ENCODE measurements at regions of chr6 and their contacts with region 1.

Region 1: DNA sequence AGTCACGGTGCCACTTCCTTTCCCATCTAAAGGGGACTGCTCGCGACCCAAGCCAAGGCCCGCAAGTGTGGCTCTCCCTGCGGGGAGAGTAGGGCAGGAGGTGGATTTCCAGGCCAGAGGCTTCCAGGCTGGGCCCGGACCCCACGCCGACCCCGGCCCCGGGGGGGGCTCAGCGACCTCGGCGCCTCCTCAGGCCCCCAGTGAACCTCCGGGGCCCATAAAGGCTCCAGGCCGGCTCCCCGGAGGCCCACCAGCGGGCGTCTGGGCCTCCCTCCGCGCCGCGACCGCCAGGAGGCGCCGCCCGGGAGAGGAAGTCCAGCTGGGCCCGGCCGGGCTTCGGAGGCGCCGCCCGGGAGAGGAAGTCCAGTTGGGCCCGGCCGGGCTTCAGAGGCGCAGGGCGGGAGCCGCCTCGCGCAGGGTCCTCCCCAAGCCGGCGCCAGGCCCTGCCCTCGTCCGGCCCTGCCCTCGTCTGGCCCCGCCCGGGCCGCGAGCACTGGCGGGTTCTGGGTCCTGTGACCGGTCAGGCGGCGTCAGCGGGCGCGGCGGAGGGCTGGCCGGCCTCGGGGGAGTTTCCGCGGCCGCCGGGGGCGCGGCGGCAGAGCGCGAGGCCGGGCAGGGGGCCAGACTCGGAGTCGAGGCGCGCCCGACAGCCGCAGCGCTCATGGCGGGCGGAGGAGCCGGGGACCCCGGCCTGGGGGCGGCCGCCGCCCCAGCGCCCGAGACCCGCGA is at the start of gene RAB32:
- DNase-seq: peak; percentile 73 to 90
- H3K4me3 ChIP-seq: peak within 1 kb of the TSS; percentile 96
- H3K27ac ChIP-seq: peak within 1 kb of the TSS; percentile 59
- H3K4me1 ChIP-seq: peaks cover 31% of the 10 kb centered on the region
- H3K27me3 ChIP-seq: no peaks in the 10 kb centered on the region
- CTCF ChIP-seq: peak; percentile 67; the same call in 1 of the 2 replicates
- total RNA-seq, gene RAB32: 21.4 and 22.6 TPM in 2 replicates

Region 2: DNA sequence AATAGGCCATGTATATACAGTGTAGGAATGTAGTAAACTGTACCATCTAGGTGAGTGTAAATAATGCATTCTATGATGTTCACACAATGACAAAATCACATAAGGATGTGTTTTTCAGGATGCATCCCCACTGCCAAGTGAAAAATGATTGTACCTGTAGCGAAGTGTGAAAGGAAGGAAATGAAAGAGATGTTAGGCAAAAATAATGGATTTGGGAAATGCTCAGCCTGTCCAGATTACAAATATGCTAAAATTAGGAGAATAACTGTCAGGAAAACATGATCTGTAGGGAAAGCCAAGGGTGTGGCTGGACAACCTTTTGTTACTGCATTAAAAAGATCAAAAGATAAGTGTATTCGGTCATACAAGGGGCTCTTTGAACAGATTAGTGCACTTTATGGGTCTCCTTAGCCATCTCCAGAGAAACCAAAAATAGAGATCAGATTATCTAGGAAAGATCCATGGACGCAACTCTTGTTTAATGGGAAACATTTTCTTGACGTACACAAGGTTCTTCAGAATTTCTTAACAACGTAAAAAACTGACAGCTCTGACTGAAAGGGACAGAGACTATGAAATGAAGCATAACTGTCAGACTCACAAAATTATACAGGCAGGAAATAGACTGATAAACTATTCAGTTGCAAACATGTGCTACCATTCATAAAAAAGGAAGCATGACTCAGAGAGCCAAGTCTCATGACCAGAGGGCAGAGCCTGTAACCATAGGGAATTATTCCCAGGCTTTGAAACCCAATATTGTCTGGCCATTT is 253.4 kb before region 1 on chr6:
- CTCF ChIA-PET with region 1: no interaction called
- POLR2A ChIA-PET with region 1: no interaction called
- intact Hi-C with region 1: loop called (anchors 10 kb)
- DNase-seq: no peak
- H3K4me3 ChIP-seq: no peak overlapping the region
- H3K27ac ChIP-seq: no peak overlapping the region
- H3K4me1 ChIP-seq: peaks cover 8% of the 10 kb centered on the region; the same call in 1 of the 2 replicates
- H3K27me3 ChIP-seq: no peaks in the 10 kb centered on the region
- CTCF ChIP-seq: no peak

Region 3: DNA sequence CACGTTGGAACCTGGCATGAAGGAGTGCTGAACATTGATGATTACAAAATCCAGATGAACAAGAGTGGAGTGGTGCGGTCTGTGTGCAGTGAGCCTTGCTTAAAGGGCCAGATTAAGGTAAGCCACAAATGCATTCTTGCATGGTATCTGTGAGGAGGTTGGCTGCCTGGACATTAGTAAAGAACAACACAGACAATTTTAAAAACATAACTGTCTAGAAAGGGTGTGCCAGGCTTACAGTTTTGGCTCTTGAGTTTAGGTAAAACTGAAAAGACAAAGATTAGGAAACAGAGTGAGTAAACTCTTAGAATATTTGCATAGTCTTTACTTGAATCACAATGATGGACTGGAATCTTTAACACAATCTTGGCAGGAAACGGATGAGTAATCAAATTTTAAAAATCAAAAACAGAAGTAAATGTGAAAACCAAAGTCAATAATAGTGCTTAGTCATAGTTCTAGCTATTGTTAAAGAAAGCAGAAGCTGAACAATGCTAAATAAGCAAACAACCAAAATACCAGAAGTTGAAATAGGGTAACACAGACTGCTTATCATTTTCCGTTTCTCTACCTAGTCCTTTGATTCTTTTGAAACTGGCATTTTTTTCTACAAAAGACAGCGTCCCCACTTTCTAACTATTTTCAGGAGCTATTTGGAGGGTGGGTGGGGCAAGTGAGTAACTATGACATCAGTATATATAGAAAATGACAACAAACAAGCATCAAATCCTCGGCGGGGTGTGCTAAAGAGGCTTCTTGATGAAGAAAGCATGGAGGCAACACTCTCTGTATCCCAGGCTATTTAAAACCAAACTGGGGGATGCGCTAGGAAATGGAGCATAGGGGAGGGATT is 185.6 kb before region 1 on chr6:
- CTCF ChIA-PET with region 1: no interaction called
- POLR2A ChIA-PET with region 1: no interaction called
- intact Hi-C with region 1: loop called (anchors 5 kb)
- DNase-seq: peak; percentile 13 to 66
- H3K4me3 ChIP-seq: peak overlapping the region; percentile 18; the same call in 1 of the 2 replicates
- H3K27ac ChIP-seq: peak overlapping the region; percentile 52
- H3K4me1 ChIP-seq: peaks cover 21% of the 10 kb centered on the region
- H3K27me3 ChIP-seq: no peaks in the 10 kb centered on the region
- CTCF ChIP-seq: no peak

Region 4: DNA sequence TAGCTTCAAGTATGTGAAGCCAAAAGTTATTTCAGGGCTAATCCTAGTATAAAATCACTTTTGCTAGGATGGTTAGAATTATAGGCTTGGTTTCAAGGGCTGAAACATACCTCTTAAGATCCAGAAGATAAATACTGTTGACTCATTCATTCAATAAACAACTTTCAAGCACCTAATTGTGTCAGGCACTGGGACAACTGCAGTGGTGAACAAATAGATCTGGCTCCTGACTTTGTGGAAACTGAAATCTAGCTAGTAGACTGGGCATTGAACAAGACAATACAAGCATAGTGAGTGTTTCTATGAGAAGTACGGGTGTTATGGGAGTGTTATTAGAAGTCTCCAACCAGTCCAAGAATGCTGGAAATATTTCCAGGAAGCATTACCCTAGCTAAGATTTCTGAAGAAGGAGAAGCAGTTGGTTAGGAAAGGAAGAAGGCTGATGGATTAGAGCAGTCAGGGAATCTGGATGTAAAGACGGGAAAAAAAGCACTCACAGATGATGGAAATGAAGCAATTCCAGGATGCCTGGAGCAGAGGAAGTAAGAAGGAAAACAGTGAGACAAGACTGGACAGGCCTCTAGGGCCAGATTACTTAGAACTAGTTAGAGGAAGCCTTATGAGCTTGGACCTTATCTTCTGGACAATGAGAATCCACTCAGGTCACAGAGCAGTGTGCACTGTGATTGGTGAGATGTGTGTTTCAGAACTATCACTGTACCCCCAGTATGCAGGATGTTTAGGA is 132.4 kb before region 1 on chr6:
- CTCF ChIA-PET with region 1: no interaction called
- POLR2A ChIA-PET with region 1: interaction called, 21 read pairs
- intact Hi-C with region 1: no loop called
- DNase-seq: no peak
- H3K4me3 ChIP-seq: no peak overlapping the region
- H3K27ac ChIP-seq: no peak overlapping the region
- H3K4me1 ChIP-seq: no peaks in the 10 kb centered on the region
- H3K27me3 ChIP-seq: no peaks in the 10 kb centered on the region
- CTCF ChIP-seq: no peak

Region 5: DNA sequence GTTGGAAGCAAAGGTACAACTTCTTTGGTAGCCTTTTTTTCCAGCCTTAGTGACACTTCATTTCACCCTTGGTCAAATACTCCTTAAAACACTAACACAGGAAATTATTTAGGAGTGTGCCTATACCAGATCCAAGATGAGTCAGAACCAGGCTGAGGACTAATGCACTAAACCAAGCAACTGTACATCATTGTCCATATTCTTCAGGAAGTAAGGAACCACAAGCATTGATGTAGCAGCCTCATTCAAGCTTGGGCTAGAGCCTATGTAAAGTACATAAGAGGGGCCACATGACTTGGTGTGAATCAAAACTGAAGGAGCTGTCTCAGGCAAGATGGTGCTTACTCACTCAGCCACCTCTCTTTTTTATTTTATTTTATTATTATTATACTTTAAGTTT is 34.7 kb after region 1 on chr6:
- CTCF ChIA-PET with region 1: no interaction called
- POLR2A ChIA-PET with region 1: no interaction called
- intact Hi-C with region 1: no loop called
- DNase-seq: no peak
- H3K4me3 ChIP-seq: no peak overlapping the region
- H3K27ac ChIP-seq: no peak overlapping the region
- H3K4me1 ChIP-seq: no peaks in the 10 kb centered on the region
- H3K27me3 ChIP-seq: no peaks in the 10 kb centered on the region
- CTCF ChIP-seq: no peak

Region 6: GRCh38 chr6:146700078-146700686 is 156.8 kb after region 1 on chr6:
- CTCF ChIA-PET with region 1: no interaction called
- POLR2A ChIA-PET with region 1: no interaction called
- intact Hi-C with region 1: loop called (anchors 10 kb)
- DNase-seq: peak; percentile 43 to 63
- H3K4me3 ChIP-seq: no peak overlapping the region
- H3K27ac ChIP-seq: no peak overlapping the region
- H3K4me1 ChIP-seq: no peaks in the 10 kb centered on the region
- H3K27me3 ChIP-seq: no peaks in the 10 kb centered on the region
- CTCF ChIP-seq: peak; percentile 82